Prostate gland (tissue), 2 donors: ENCODE measurements at regions of chr22 and their contacts with region 1.

Region 1: DNA sequence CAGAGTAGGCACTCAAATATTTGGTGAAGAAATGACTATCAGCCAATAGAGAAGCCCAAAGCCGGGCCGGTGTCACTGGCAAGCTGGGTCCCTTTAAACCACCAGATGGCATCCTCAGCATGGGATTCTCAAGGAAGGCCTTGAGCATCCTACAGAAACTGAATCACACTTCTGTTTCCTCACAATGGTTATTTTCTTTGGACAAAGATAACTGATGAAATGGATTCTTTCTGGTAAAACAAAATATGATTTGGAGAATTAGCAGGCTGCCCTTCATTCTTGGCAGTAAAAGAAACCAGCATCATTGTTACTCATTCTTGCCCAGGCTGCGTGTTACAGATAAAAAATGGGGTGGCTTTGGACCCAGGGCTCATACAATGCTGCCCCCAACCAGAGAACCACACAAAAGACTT is 30.3 kb upstream of the ASPHD2 start:
- DNase-seq: peak; percentile 62
- H3K4me3 ChIP-seq: no peak overlapping the region
- H3K27ac ChIP-seq: no peak overlapping the region
- H3K4me1 ChIP-seq: no peaks in the 10 kb centered on the region
- H3K27me3 ChIP-seq: no peaks in the 10 kb centered on the region
- CTCF ChIP-seq: peak; percentile 47 to 79 (median 70)
- POLR2A ChIP-seq: no peak

Region 2: DNA sequence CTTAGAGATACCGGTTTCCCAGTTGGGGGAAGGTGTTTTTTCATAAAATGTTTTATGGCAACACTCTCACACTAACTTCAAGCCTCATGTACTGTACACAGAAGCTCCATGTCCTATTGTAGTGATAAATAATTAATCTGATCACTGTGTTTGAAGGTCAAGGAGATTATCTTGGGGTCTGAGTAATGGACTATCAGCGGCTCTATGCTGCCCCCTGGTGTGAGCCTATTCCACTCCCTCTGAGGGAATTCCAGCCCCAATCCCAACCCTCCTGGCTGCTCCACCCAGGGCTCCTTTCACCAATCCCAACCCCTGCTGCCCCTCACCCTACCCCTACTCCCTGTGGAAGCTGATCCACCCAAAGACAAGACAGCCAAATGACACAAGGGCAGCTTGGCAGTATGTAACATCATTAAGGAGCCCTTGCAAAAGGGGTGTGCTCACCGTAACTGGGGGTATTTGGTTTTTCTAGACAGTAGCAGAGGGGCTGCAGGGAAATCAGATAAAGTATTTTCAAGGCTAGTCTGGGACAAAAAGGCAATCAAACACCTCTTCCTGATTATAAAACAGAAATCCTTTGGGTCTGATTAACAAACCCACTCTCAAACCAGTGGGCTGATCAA is 62.6 kb after region 1 on chr22:
- intact Hi-C with region 1: loop called (anchors 1 kb)
- DNase-seq: peak; percentile 54
- H3K4me3 ChIP-seq: no peak overlapping the region
- H3K27ac ChIP-seq: peak overlapping the region in 1 of 2 donors; percentile 8
- H3K4me1 ChIP-seq: no peaks in the 10 kb centered on the region
- H3K27me3 ChIP-seq: no peaks in the 10 kb centered on the region
- CTCF ChIP-seq: peak; percentile 60 to 81 (median 77)
- POLR2A ChIP-seq: no peak